Caco-2 (cell line): ENCODE measurements at regions of chr4 and their contacts with region 1.

Region 1: DNA sequence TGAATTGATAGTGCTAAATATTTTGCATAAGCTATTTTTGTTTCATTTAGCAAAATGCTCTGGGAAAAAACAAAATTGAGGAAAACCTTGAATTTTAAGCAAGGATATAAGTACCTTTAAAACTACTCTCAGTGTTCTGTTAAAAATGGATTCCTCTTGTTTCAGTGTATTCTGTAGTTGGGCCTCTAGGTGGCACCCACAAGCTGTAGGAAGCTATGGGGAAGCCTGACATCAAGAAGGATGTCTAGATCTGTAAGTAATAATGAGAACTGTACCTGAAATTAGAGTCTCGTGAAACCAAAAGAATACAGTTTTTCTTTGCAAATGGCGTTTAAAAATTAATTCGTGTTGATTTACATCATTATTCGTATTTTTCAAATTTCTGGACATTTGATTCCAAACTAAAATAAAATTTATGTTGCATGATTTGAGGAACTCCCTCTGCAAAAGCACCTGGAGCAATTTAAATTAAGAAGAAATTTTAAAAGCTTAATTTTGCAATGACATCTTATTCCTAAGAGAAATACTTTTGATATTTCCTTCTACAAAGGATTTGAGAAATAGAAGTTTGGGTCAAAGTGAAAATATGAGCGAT is 51.2 kb downstream of the TMPRSS11E start:
- DNase-seq: peak; percentile 68 to 78
- H3K4me3 ChIP-seq: no peak overlapping the region
- H3K4me3 Mint-ChIP-seq: no peak overlapping the region
- H3K27ac Mint-ChIP-seq: no peak overlapping the region
- H3K4me1 ChIP-seq: peaks cover 14% of the 10 kb centered on the region
- H3K4me1 Mint-ChIP-seq: no peaks in the 10 kb centered on the region
- H3K27me3 ChIP-seq: no peaks in the 10 kb centered on the region
- H3K27me3 Mint-ChIP-seq: no peaks in the 10 kb centered on the region
- CTCF ChIP-seq: peak; percentile 77 to 85

Region 2: GRCh38 chr4:68271851-68272756 is 226.4 kb before region 1 on chr4:
- CTCF ChIA-PET with region 1: no interaction called
- POLR2A ChIA-PET with region 1: no interaction called
- intact Hi-C with region 1: loop called (anchors 1 kb)
- DNase-seq: peak in 1 of 2 experiments; percentile 49
- H3K4me3 ChIP-seq: no peak overlapping the region
- H3K4me3 Mint-ChIP-seq: no peak overlapping the region
- H3K27ac Mint-ChIP-seq: peak overlapping the region; percentile 94
- H3K4me1 ChIP-seq: peaks cover 29% of the 10 kb centered on the region
- H3K4me1 Mint-ChIP-seq: peaks cover 5% of the 10 kb centered on the region
- H3K27me3 ChIP-seq: no peaks in the 10 kb centered on the region
- H3K27me3 Mint-ChIP-seq: no peaks in the 10 kb centered on the region
- CTCF ChIP-seq: peak; percentile 50 to 75

Region 3: GRCh38 chr4:68693325-68694075 is 195.0 kb after region 1 on chr4:
- CTCF ChIA-PET with region 1: no interaction called
- POLR2A ChIA-PET with region 1: no interaction called
- intact Hi-C with region 1: loop called (anchors 1 kb)
- DNase-seq: peak; percentile 81 to 90
- H3K4me3 ChIP-seq: no peak overlapping the region
- H3K4me3 Mint-ChIP-seq: no peak overlapping the region
- H3K27ac Mint-ChIP-seq: peak overlapping the region; percentile 72
- H3K4me1 ChIP-seq: peaks cover 20% of the 10 kb centered on the region
- H3K4me1 Mint-ChIP-seq: peaks cover 6% of the 10 kb centered on the region
- H3K27me3 ChIP-seq: no peaks in the 10 kb centered on the region
- H3K27me3 Mint-ChIP-seq: no peaks in the 10 kb centered on the region
- CTCF ChIP-seq: no peak

Region 4: GRCh38 chr4:68904786-68905185 is 406.3 kb after region 1 on chr4:
- CTCF ChIA-PET with region 1: no interaction called
- POLR2A ChIA-PET with region 1: no interaction called
- intact Hi-C with region 1: loop called (anchors 1 kb)
- DNase-seq: peak; percentile 62 to 63
- H3K4me3 ChIP-seq: no peak overlapping the region
- H3K4me3 Mint-ChIP-seq: peak overlapping the region; percentile 83
- H3K27ac Mint-ChIP-seq: peak overlapping the region; percentile 94
- H3K4me1 ChIP-seq: peaks cover 47% of the 10 kb centered on the region
- H3K4me1 Mint-ChIP-seq: peaks cover 17% of the 10 kb centered on the region
- H3K27me3 ChIP-seq: no peaks in the 10 kb centered on the region
- H3K27me3 Mint-ChIP-seq: no peaks in the 10 kb centered on the region
- CTCF ChIP-seq: peak; percentile 44 to 54

Region 5: GRCh38 chr4:69025191-69025998 is 526.9 kb after region 1 on chr4:
- CTCF ChIA-PET with region 1: no interaction called
- POLR2A ChIA-PET with region 1: no interaction called
- intact Hi-C with region 1: loop called (anchors 2 kb)
- DNase-seq: peak; percentile 39 to 47
- H3K4me3 ChIP-seq: no peak overlapping the region
- H3K4me3 Mint-ChIP-seq: no peak overlapping the region
- H3K27ac Mint-ChIP-seq: no peak overlapping the region
- H3K4me1 ChIP-seq: peaks cover 10% of the 10 kb centered on the region
- H3K4me1 Mint-ChIP-seq: peaks cover 4% of the 10 kb centered on the region
- H3K27me3 ChIP-seq: no peaks in the 10 kb centered on the region
- H3K27me3 Mint-ChIP-seq: no peaks in the 10 kb centered on the region
- CTCF ChIP-seq: peak; percentile 35 to 53

Region 6: DNA sequence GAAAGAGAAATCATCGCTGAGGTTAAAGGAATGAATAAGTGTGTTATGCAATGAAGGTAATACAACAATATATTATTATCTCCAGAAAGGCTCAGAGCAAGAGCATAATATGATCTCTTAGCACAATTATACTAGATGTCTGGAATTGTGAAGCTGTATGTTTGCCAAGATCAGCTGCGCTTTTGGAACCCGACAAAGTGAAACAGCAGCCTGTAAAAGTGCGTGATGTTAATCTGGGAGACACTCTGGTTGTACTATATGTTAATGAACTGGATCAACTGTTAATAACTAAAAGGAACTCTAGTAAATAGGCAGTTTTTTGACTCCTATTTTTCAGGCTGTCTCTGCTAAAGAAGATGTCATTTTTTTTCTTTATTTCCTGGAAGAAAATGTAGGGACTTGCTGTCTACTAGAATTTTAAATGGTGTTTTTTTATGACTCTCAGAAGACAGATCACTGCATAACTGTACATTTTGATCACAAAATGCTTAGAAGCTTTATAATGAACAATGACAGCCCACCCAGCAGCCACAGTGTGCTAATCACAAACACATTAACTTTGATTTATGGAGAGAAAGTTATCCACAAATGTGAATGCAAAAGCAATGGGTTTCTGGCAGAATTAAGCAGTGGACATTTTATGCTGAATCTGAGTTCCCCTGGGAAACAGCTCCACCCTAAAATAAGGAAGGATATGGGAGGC is 832.0 kb after region 1 on chr4:
- CTCF ChIA-PET with region 1: no interaction called
- POLR2A ChIA-PET with region 1: no interaction called
- intact Hi-C with region 1: loop called (anchors 5 kb)
- DNase-seq: no peak
- H3K4me3 ChIP-seq: no peak overlapping the region
- H3K4me3 Mint-ChIP-seq: no peak overlapping the region
- H3K27ac Mint-ChIP-seq: no peak overlapping the region
- H3K4me1 ChIP-seq: no peaks in the 10 kb centered on the region
- H3K4me1 Mint-ChIP-seq: no peaks in the 10 kb centered on the region
- H3K27me3 ChIP-seq: no peaks in the 10 kb centered on the region
- H3K27me3 Mint-ChIP-seq: no peaks in the 10 kb centered on the region
- CTCF ChIP-seq: no peak